Mucosa of descending colon (tissue), 3 donors: ENCODE measurements at regions of chr3 and their contacts with region 1.

Region 1: DNA sequence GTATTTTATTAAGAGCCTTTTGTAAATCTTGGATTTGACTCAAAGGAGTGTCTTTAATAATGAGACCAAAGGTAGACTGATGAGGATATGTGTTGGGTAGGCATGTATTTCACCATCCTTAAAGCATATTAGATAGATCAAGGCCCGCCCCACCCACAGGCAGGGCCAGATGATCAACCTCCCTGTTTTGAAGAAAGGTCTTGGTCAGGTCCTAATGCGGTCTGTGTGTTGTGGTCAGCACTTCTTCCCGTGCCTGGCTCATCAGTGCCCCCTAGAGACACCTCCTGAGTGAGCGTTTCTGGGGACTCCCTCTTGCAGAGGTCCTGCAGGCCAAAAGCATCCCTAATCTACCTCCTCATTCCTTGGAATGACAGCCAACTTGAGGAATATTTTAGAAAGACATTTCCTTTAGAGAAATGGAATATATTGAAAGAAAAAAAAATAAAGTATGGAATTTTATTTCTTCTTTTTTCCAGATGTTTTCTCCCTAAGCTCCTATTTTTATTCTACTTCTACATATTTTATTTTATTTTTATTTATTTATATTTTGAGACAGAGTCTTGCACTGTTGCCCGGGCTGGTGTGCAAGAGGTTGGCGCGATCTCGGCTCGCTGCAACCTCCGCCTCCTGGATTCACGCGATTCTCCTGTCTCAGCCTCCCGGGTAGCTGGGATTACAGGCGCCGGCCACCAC is 6.0 kb downstream of the TM4SF4 start:
- DNase-seq: peak; percentile 65 to 88 (median 81)
- ATAC-seq: peak; percentile 97
- H3K4me3 ChIP-seq: no peak overlapping the region
- H3K4me1 ChIP-seq: no peaks in the 10 kb centered on the region
- CTCF ChIP-seq: peak; percentile 78

Region 2: GRCh38 chr3:149129326-149130205 is 350.9 kb before region 1 on chr3 and contains the start of gene HPS3:
- intact Hi-C with region 1: loop called in 1 of 2 experiments (anchors 10 kb)
- DNase-seq: peak; percentile 95 to 96 (median 96)
- ATAC-seq: peak; percentile 98
- H3K4me3 ChIP-seq: peak within 1 kb of the TSS; percentile 74
- H3K4me1 ChIP-seq: peaks cover 20% of the 10 kb centered on the region
- CTCF ChIP-seq: no peak
- total RNA-seq, gene HPS3: 14.5 to 24.2 (median 20.2) TPM

Region 3: DNA sequence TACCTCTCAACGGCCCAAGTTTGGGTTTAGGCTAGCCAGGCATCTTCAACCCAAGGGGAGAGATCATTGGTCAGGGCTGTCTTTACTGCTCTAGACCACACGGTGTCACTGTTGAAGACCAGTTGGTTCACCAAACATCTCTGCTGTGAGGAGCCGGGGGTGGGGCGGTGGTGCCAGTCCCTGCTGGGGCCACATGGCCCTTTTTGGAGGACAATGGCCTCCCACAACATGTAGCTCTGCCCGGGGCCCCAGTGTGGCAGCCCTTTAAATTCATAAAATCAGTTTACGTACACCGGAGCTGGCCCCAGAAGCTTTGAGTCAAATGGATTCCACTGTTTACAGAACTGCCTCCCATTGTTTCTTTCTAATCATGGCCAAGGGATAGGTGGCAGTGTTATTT is 127.9 kb before region 1 on chr3:
- intact Hi-C with region 1: loop called in 1 of 2 experiments (anchors 5 kb)
- DNase-seq: peak; percentile 52 to 57 (median 54)
- ATAC-seq: peak; percentile 92
- H3K4me3 ChIP-seq: no peak overlapping the region
- H3K4me1 ChIP-seq: no peaks in the 10 kb centered on the region
- CTCF ChIP-seq: no peak